ENCODE measurements at regions of chr7 and their contacts with region 1.

Region 1: DNA sequence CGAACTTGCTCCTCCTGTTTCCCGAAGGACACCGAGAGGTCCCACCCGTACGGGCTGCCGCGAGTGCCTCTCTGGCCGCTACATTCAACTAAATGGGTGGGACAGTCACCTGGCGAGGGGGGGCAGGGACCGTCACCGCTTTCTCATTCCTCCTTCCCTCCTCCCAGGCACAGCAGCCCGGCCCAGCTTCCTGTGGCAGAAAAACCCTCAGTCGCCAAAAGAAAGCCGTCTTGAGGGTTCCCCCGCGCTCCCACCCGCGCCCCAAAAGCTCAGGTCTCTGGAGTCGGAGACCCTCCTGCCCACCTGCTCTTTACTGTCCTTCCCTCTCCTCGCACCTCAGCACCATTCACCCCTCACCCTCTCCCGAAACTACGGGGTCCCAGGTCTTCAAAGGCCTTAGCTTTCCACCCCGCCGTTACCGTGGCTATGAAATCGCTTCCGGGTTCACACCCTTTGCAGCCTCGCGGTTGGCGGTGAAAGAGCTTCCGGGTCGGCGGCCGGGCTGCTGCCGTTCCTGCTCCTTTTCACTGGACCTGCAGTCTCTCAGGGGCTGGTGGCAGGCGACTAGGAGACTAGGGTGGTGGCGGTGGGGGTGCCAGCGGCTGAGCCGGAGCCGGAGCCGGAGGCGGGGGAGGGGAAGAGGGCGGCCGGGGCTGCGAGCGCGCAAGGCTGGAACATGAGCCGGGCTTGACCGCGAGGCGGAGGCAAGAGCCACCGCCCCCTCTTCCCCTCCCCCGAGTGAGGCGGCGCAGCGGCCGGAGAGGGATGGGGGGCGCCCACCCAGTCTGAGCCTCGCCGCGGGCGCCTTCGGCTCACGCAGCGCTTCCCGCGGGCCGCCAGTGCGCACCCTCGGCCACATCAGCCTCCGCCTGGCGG is at the starts of genes ANKIB1 and KRIT1:
- DNase-seq: peak; percentile 81
- ATAC-seq: peak; percentile 84
- H3K4me3 ChIP-seq: peak within 1 kb of the TSS; percentile 82 to 92
- H3K27ac ChIP-seq: peak within 1 kb of the TSS; percentile 79
- H3K4me1 ChIP-seq: peaks cover 11 to 24% of the 10 kb centered on the region in 2 experiments; a peak in 3 of 4 replicates
- H3K27me3 ChIP-seq: no peaks in the 10 kb centered on the region
- CTCF ChIP-seq: 0 out of 6 replicates have a peak, but pooled peaks of 1 of the 3 experiments have one; percentile 4
- POLR2A ChIP-seq: peak; percentile 66
- RAD21 ChIP-seq: no peak
- total RNA-seq, gene ANKIB1: 41.2 TPM
- total RNA-seq, gene KRIT1: 32.4 TPM

Region 2: DNA sequence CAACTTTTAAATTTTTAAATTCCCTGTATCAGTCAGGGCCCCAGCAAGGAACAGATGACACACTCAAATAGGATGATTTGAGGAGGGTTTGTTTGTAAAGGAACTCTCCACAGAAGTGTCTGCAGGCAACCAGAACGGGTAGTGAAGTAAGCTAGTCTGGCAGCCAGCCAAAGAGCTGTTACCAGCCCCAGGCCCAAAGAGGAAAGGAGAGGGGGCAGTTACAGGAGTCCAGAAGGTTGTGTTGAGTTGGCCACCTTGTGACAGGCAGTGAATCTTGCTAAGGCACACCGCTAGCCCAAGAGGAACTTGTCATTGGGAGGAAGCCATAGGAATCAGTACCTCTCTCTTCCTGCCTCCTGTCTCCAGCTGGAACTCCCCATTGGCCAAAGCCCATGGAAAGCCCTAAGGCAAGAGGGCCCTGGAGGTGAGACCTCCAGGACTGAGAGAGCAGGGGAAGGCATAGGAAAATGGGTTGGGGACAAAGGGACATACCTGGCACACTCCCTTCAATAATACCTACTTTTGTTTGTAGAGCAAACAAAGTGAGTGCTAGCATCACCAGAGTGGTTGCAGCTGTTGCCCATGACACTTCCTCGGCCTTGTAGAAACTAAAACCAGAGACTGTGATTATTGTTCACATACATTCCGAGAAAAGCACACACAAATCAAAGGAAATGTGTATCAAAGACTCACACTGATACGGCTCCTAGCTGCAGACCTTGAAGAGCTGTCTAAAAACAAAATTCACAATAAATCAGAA is 176.1 kb after region 1 on chr7:
- CTCF ChIA-PET with region 1: interaction called, 3 read pairs
- POLR2A ChIA-PET with region 1: no interaction called
- RAD21 ChIA-PET with region 1: no interaction called
- intact Hi-C with region 1: loop called (anchors 10 kb)
- DNase-seq: no peak
- ATAC-seq: no peak
- H3K4me3 ChIP-seq: no peak overlapping the region
- H3K27ac ChIP-seq: no peak overlapping the region
- H3K4me1 ChIP-seq: peaks cover 0 to 12% of the 10 kb centered on the region in 2 experiments; a peak in 2 of 4 replicates
- H3K27me3 ChIP-seq: no peaks in the 10 kb centered on the region
- CTCF ChIP-seq: no peak
- POLR2A ChIP-seq: no peak
- RAD21 ChIP-seq: no peak

Region 3: GRCh38 chr7:92527300-92528187 is 281.8 kb after region 1 on chr7:
- CTCF ChIA-PET with region 1: no interaction called
- POLR2A ChIA-PET with region 1: no interaction called
- RAD21 ChIA-PET with region 1: no interaction called
- intact Hi-C with region 1: no loop called
- DNase-seq: peak; percentile 37
- ATAC-seq: peak; percentile 59
- H3K4me3 ChIP-seq: peak overlapping the region; percentile 77 to 85
- H3K27ac ChIP-seq: peak overlapping the region; percentile 79
- H3K4me1 ChIP-seq: peaks cover 5 to 12% of the 10 kb centered on the region in 2 experiments; a peak in 3 of 4 replicates
- H3K27me3 ChIP-seq: no peaks in the 10 kb centered on the region
- CTCF ChIP-seq: 0 out of 6 replicates have a peak, but pooled peaks of 1 of the 3 experiments have one; percentile 17
- POLR2A ChIP-seq: no peak
- RAD21 ChIP-seq: peak; percentile 22; the same call in 1 of the 2 replicates

Measured in HCT116 (cell line).